ENCODE measurements at regions of chr1 and their contacts with region 1.

Region 1: GRCh38 chr1:195097316-195097715 is 1510.9 kb downstream of the KCNT2 start:
- DNase-seq: no peak
- ATAC-seq: peak in 1 of 4 experiments; percentile 34
- H3K4me3 ChIP-seq: no peak overlapping the region
- H3K4me3 Mint-ChIP-seq: no peak overlapping the region
- H3K27ac ChIP-seq: no peak overlapping the region
- H3K27ac Mint-ChIP-seq: no peak overlapping the region
- H3K4me1 ChIP-seq: no peaks in the 10 kb centered on the region
- H3K4me1 Mint-ChIP-seq: no peaks in the 10 kb centered on the region
- H3K27me3 ChIP-seq: no peaks in the 10 kb centered on the region
- H3K27me3 Mint-ChIP-seq: no peaks in the 10 kb centered on the region

Region 2: DNA sequence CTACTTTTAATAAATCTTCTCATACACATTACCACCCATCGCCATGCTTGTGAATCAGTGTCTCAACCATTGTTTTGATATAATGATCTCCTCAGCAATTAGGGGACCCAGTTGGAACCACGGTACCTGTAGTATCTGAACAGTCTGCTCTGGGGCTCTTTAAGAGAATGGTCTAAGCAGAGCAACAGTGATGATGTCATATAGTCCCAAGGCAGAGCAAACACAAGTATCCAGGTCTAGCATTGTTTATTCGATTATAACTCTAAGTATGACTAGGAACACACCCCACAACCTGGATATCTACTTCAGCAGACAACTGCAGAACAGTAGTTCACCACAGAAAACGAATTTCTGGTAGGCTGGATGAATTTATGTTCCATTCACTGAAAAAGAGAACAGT is 55.2 kb after region 1 on chr1:
- CTCF ChIA-PET with region 1: interaction called in 1 of 2 experiments, 10 read pairs
- POLR2A ChIA-PET with region 1: no interaction called
- DNase-seq: no peak
- ATAC-seq: no peak
- H3K4me3 ChIP-seq: no peak overlapping the region
- H3K4me3 Mint-ChIP-seq: no peak overlapping the region
- H3K27ac ChIP-seq: no peak overlapping the region
- H3K27ac Mint-ChIP-seq: no peak overlapping the region
- H3K4me1 ChIP-seq: no peaks in the 10 kb centered on the region
- H3K4me1 Mint-ChIP-seq: no peaks in the 10 kb centered on the region
- H3K27me3 ChIP-seq: no peaks in the 10 kb centered on the region
- H3K27me3 Mint-ChIP-seq: no peaks in the 10 kb centered on the region

Measured in T-cell (primary cell).